Breast epithelium (tissue), 4 donors: ENCODE measurements at regions of chr2 and their contacts with region 1.

Region 1: GRCh38 chr2:100992262-100992661 is 9.8 kb upstream of the RPL31 start:
- DNase-seq: no peak
- H3K4me3 ChIP-seq: no peak overlapping the region
- H3K27ac ChIP-seq: no peak overlapping the region
- H3K4me1 ChIP-seq: no peaks in the 10 kb centered on the region
- H3K27me3 ChIP-seq: no peaks in the 10 kb centered on the region
- CTCF ChIP-seq: no peak
- POLR2A ChIP-seq: no peak

Region 2: DNA sequence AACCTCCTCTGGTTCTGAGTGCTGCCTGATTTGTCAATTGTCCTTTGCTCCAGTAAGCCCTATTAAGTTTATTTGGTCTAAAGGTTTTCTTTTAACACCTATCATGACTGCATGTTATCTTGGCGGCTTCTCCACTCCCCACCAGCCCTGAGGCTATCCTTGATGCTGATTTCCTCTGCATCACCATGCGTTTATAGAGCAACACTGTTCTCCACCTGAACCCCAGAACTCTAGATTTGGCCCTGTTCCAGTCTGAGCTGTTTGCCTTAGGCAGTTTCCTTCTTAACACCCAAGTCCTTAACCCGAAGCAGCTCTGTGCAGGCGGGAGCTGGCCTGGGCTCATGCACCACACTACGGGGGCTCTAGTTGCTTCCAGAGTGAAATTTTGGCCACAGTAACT is 270.6 kb before region 1 on chr2:
- intact Hi-C with region 1: loop called (anchors 10 kb)
- DNase-seq: no peak
- H3K4me3 ChIP-seq: no peak overlapping the region
- H3K27ac ChIP-seq: no peak overlapping the region
- H3K4me1 ChIP-seq: no peaks in the 10 kb centered on the region
- H3K27me3 ChIP-seq: no peaks in the 10 kb centered on the region
- CTCF ChIP-seq: no peak
- POLR2A ChIP-seq: no peak